Vagina (tissue), 2 donors: ENCODE measurements at regions of chr12 and their contacts with region 1.

Region 1: DNA sequence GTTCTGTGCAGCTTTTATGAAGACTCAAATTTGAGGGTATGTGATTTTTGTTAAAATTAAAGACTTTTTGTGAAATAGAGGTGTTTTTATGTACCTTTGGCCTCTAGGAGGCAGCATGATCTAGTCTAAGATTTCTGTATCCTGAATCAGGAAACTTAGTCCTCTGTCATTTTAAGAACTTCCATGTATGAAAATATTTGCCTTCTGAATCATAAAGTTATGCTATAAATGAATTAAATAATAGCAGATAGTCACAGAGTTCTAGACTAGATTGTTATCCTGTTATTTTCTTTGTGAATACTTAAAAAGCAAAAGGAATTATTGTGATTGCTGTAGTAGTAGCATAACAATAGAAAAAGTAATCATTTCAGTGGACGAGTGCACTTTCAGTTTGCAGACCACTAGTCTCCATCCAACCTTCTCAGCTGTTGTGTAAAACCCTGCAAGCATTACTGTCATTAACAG is 56.3 kb downstream of the FGD4 start:
- DNase-seq: no peak
- H3K4me3 ChIP-seq: peak overlapping the region; percentile 5 to 24
- H3K27ac ChIP-seq: peak overlapping the region; percentile 50
- H3K4me1 ChIP-seq: peaks cover 25% of the 10 kb centered on the region
- H3K27me3 ChIP-seq: no peaks in the 10 kb centered on the region
- CTCF ChIP-seq: peak; percentile 8 to 78 (median 71)
- POLR2A ChIP-seq: no peak

Region 2: GRCh38 chr12:32548691-32549281 is 93.1 kb after region 1 on chr12:
- intact Hi-C with region 1: no loop called
- DNase-seq: no peak
- H3K4me3 ChIP-seq: no peak overlapping the region
- H3K27ac ChIP-seq: peak overlapping the region; percentile 75
- H3K4me1 ChIP-seq: peaks cover 58% of the 10 kb centered on the region
- H3K27me3 ChIP-seq: no peaks in the 10 kb centered on the region
- CTCF ChIP-seq: no peak
- POLR2A ChIP-seq: no peak

Region 3: GRCh38 chr12:32679091-32679919 is 223.7 kb after region 1 on chr12 and contains the start of gene DNM1L:
- intact Hi-C with region 1: loop called (anchors 5 kb)
- DNase-seq: peak in 1 of 2 donors; percentile 92
- H3K4me3 ChIP-seq: peak within 1 kb of the TSS; percentile 73 to 89
- H3K27ac ChIP-seq: peak within 1 kb of the TSS; percentile 87
- H3K4me1 ChIP-seq: peaks cover 14% of the 10 kb centered on the region
- H3K27me3 ChIP-seq: no peaks in the 10 kb centered on the region
- CTCF ChIP-seq: no peak
- POLR2A ChIP-seq: peak in 1 of 2 donors; percentile 64
- total RNA-seq, gene DNM1L: 81.8 TPM